Vagina (tissue), 2 donors: ENCODE measurements at regions of chr10 and their contacts with region 1.

Region 1: GRCh38 chr10:9331583-9332008 is 1277.1 kb downstream of the GATA3 start:
- DNase-seq: no peak
- H3K4me3 ChIP-seq: no peak overlapping the region
- H3K27ac ChIP-seq: no peak overlapping the region
- H3K4me1 ChIP-seq: no peaks in the 10 kb centered on the region
- H3K27me3 ChIP-seq: no peaks in the 10 kb centered on the region
- CTCF ChIP-seq: peak; percentile 20 to 59 (median 45)
- POLR2A ChIP-seq: no peak

Region 2: GRCh38 chr10:9926881-9927280 is 595.3 kb after region 1 on chr10:
- intact Hi-C with region 1: no loop called
- DNase-seq: no peak
- H3K4me3 ChIP-seq: no peak overlapping the region
- H3K27ac ChIP-seq: no peak overlapping the region
- H3K4me1 ChIP-seq: no peaks in the 10 kb centered on the region
- H3K27me3 ChIP-seq: no peaks in the 10 kb centered on the region
- CTCF ChIP-seq: no peak
- POLR2A ChIP-seq: no peak

Region 3: GRCh38 chr10:11036407-11037011 is 1704.9 kb after region 1 on chr10:
- intact Hi-C with region 1: loop called (anchors 10 kb)
- DNase-seq: no peak
- H3K4me3 ChIP-seq: no peak overlapping the region
- H3K27ac ChIP-seq: no peak overlapping the region
- H3K4me1 ChIP-seq: no peaks in the 10 kb centered on the region
- H3K27me3 ChIP-seq: no peaks in the 10 kb centered on the region
- CTCF ChIP-seq: peak in 2 of 3 experiments; percentile 33 to 51
- POLR2A ChIP-seq: no peak